ENCODE measurements at regions of chr2 and their contacts with region 1.

Region 1: GRCh38 chr2:118202707-118203303 is 114.5 kb downstream of the INSIG2 start:
- DNase-seq: peak in 7 of 9 donors; percentile 30 to 57 (median 46)
- ATAC-seq: peak; percentile 91
- H3K4me3 ChIP-seq: no peak overlapping the region
- H3K4me3 Mint-ChIP-seq: peak overlapping the region; percentile 9 to 70 (median 36)
- H3K27ac ChIP-seq: no peak overlapping the region
- H3K27ac Mint-ChIP-seq: no peak overlapping the region
- H3K4me1 ChIP-seq: no peaks in the 10 kb centered on the region
- H3K4me1 Mint-ChIP-seq: peaks cover 4 to 7% (median 6%) of the 10 kb centered on the region in 7 donors
- H3K27me3 ChIP-seq: no peaks in the 10 kb centered on the region
- H3K27me3 Mint-ChIP-seq: peaks cover 19 to 28% (median 22%) of the 10 kb centered on the region in 5 donors

Region 2: GRCh38 chr2:118855451-118856279 is 652.9 kb after region 1 on chr2:
- CTCF ChIA-PET with region 1: no interaction called
- POLR2A ChIA-PET with region 1: no interaction called
- intact Hi-C with region 1: loop called in 1 of 2 experiments (anchors 1 kb)
- DNase-seq: peak; percentile 61 to 90 (median 84)
- ATAC-seq: peak; percentile 93
- H3K4me3 ChIP-seq: peak overlapping the region; percentile 62
- H3K4me3 Mint-ChIP-seq: peak overlapping the region; percentile 37 to 81 (median 74)
- H3K27ac ChIP-seq: no peak overlapping the region
- H3K27ac Mint-ChIP-seq: peak overlapping the region in 2 of 9 donors; percentile 33 to 81
- H3K4me1 ChIP-seq: peaks cover 0 to 17% of the 10 kb centered on the region in 2 donors
- H3K4me1 Mint-ChIP-seq: peaks cover 19 to 38% (median 24%) of the 10 kb centered on the region in 7 donors
- H3K27me3 ChIP-seq: peaks cover 2 to 41% of the 10 kb centered on the region in 2 donors
- H3K27me3 Mint-ChIP-seq: peaks cover 70 to 93% (median 81%) of the 10 kb centered on the region in 5 donors

Region 3: DNA sequence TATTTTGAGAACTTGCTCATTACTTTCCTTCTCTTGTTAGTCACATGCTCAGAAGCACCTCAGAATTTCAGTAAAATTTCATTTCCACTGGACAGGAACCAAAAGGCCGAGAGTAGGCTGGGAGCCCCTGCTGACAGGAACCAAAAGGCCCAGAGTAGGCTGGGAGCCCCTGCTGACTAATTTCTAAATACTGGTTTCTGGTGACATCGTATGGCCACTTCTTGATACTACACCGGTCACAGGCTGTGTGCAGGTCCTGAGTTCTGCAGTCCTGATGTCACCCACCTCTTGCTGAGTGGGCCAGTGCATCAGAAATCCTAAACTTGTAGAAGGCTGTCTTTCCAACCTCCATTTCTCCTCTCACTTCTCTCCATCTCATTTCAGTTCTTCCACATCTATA is 662.3 kb after region 1 on chr2:
- CTCF ChIA-PET with region 1: no interaction called
- POLR2A ChIA-PET with region 1: no interaction called
- intact Hi-C with region 1: loop called in 1 of 2 experiments (anchors 1 kb)
- DNase-seq: peak in 1 of 9 donors; percentile 32
- ATAC-seq: peak; percentile 76
- H3K4me3 ChIP-seq: no peak overlapping the region
- H3K4me3 Mint-ChIP-seq: no peak overlapping the region
- H3K27ac ChIP-seq: no peak overlapping the region
- H3K27ac Mint-ChIP-seq: no peak overlapping the region
- H3K4me1 ChIP-seq: no peaks in the 10 kb centered on the region
- H3K4me1 Mint-ChIP-seq: peaks cover 0 to 2% (median 0%) of the 10 kb centered on the region in 7 donors
- H3K27me3 ChIP-seq: no peaks in the 10 kb centered on the region
- H3K27me3 Mint-ChIP-seq: peaks cover 32 to 54% (median 48%) of the 10 kb centered on the region in 5 donors

Region 4: DNA sequence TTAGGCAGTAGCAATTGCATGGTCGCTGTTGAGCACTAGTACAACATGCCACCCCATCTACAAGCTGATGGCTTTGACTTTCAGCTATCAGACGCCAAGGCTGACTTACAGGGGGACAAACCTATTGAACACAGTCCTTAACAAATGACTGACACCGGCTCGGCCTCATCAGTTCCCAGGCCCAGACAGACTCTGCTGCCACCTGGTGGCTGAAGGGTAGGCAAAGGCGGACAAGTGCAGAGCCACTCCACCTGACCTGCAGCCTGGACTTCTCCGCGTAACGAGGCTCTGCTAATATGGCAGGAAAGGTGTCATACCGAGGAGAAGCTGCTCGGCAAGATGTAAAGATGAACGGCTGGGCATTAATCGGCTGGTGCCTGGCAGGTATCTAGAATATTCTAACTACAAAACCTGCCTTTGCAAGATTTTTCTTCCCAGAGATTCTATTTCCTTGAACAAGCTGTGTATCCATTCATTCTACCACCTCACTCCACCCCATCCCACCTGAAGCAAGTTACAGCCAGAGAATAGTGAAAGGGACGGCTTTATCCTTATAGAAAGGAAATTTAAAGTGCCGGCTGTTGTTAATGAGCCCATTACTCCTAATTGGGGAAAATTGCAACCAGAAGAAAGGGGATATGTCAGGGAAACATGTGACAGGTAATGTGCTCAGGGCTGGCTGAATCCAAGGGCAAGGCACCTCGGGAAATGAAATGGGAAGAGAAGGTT is 1088.2 kb after region 1 on chr2:
- CTCF ChIA-PET with region 1: no interaction called
- POLR2A ChIA-PET with region 1: no interaction called
- intact Hi-C with region 1: loop called in 1 of 2 experiments (anchors 1 kb)
- DNase-seq: peak in 4 of 9 donors; percentile 34 to 72 (median 48)
- ATAC-seq: no peak
- H3K4me3 ChIP-seq: no peak overlapping the region
- H3K4me3 Mint-ChIP-seq: no peak overlapping the region
- H3K27ac ChIP-seq: no peak overlapping the region
- H3K27ac Mint-ChIP-seq: no peak overlapping the region
- H3K4me1 ChIP-seq: no peaks in the 10 kb centered on the region
- H3K4me1 Mint-ChIP-seq: no peaks in the 10 kb centered on the region
- H3K27me3 ChIP-seq: no peaks in the 10 kb centered on the region
- H3K27me3 Mint-ChIP-seq: no peaks in the 10 kb centered on the region